ENCODE measurements at regions of chr10 and their contacts with region 1.

Region 1: GRCh38 chr10:6580279-6581029 is 378 bp upstream of the PRKCQ start:
- DNase-seq: peak; percentile 80 to 89 (median 83)
- H3K4me3 ChIP-seq: peak overlapping the region; percentile 81
- H3K4me3 Mint-ChIP-seq: peak overlapping the region; percentile 88 to 98 (median 94)
- H3K27ac ChIP-seq: peak overlapping the region; percentile 83
- H3K27ac Mint-ChIP-seq: peak overlapping the region; percentile 91 to 99 (median 96)
- H3K4me1 ChIP-seq: peaks cover 54% of the 10 kb centered on the region
- H3K4me1 Mint-ChIP-seq: peaks cover 62 to 70% (median 70%) of the 10 kb centered on the region in 3 donors
- H3K27me3 ChIP-seq: no peaks in the 10 kb centered on the region
- H3K27me3 Mint-ChIP-seq: no peaks in the 10 kb centered on the region

Region 2: GRCh38 chr10:6445501-6446316 is 134.7 kb before region 1 on chr10:
- CTCF ChIA-PET with region 1: interaction called, 26 read pairs
- POLR2A ChIA-PET with region 1: no interaction called
- DNase-seq: peak; percentile 25 to 71 (median 45)
- H3K4me3 ChIP-seq: no peak overlapping the region
- H3K4me3 Mint-ChIP-seq: peak overlapping the region in 2 of 7 donors; percentile 13 to 82
- H3K27ac ChIP-seq: no peak overlapping the region
- H3K27ac Mint-ChIP-seq: peak overlapping the region; percentile 1 to 95 (median 48)
- H3K4me1 ChIP-seq: peaks cover 6% of the 10 kb centered on the region
- H3K4me1 Mint-ChIP-seq: peaks cover 16 to 43% (median 23%) of the 10 kb centered on the region in 3 donors
- H3K27me3 ChIP-seq: no peaks in the 10 kb centered on the region
- H3K27me3 Mint-ChIP-seq: no peaks in the 10 kb centered on the region

Region 3: GRCh38 chr10:6530211-6530840 is 50.1 kb before region 1 on chr10:
- CTCF ChIA-PET with region 1: interaction called, 15 read pairs
- POLR2A ChIA-PET with region 1: interaction called, 11 read pairs
- DNase-seq: peak; percentile 55 to 85 (median 78)
- H3K4me3 ChIP-seq: peak overlapping the region; percentile 32
- H3K4me3 Mint-ChIP-seq: peak overlapping the region; percentile 65 to 93 (median 89)
- H3K27ac ChIP-seq: peak overlapping the region; percentile 69
- H3K27ac Mint-ChIP-seq: peak overlapping the region; percentile 93 to 100 (median 98)
- H3K4me1 ChIP-seq: peaks cover 72% of the 10 kb centered on the region
- H3K4me1 Mint-ChIP-seq: peaks cover 86 to 96% (median 96%) of the 10 kb centered on the region in 3 donors
- H3K27me3 ChIP-seq: no peaks in the 10 kb centered on the region
- H3K27me3 Mint-ChIP-seq: peaks cover 0 to 2% of the 10 kb centered on the region in 2 donors

Region 4: GRCh38 chr10:6558759-6559461 is 21.5 kb before region 1 on chr10:
- CTCF ChIA-PET with region 1: interaction called, 9 read pairs
- POLR2A ChIA-PET with region 1: interaction called, 10 read pairs
- DNase-seq: peak in 1 of 5 donors; percentile 58
- H3K4me3 ChIP-seq: no peak overlapping the region
- H3K4me3 Mint-ChIP-seq: peak overlapping the region; percentile 53 to 90 (median 84)
- H3K27ac ChIP-seq: peak overlapping the region; percentile 20
- H3K27ac Mint-ChIP-seq: peak overlapping the region; percentile 81 to 99 (median 94)
- H3K4me1 ChIP-seq: peaks cover 91% of the 10 kb centered on the region
- H3K4me1 Mint-ChIP-seq: peaks cover 87 to 96% (median 94%) of the 10 kb centered on the region in 3 donors
- H3K27me3 ChIP-seq: no peaks in the 10 kb centered on the region
- H3K27me3 Mint-ChIP-seq: no peaks in the 10 kb centered on the region

Region 5: DNA sequence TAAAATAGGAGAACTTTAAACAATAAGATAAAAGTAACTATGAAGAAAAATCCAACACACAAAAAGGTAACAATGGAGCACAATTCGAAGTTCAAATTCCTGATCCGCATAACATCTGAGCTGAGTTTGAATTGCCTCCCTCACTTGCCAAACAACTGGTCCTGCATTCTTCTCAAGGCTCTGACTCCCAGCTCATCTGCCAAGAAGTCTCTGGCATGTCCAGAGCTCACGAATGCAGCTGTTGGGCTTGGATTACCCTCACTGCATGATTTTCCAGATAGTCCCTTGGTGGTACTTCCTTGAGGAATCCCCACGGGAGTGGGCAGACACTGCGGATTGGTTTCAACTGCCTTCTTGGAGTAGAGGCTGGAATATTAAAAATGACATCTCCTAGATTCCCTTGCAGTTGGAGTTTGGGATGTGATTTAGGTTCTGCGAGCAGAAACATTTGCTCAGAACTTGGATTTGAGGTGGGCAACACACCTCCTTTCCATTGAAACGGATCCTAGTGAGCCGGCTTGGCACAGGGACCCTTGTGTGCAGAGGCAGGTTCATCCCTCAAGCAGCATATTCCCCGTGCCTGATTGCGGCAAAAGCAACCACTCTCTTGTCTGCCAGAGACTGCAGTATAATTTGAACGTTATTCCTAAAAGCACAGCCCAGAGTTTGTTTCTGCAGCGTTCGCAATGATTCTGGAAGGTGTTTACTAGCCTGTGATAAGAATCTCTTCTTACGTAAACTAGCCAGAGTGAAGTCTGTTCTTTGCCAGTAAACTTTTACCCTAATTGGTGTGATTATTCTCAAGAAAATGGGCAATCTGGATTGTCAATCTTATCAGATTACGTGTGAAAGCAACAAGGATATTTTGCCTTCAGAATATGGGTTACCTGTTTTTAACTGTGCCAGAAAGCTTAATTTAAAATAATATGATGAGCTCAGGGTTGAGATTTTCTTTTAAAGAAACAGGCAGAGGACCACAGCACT is 23.0 kb after region 1 on chr10:
- CTCF ChIA-PET with region 1: interaction called, 39 read pairs
- POLR2A ChIA-PET with region 1: interaction called, 3 read pairs
- DNase-seq: no peak
- H3K4me3 ChIP-seq: no peak overlapping the region
- H3K4me3 Mint-ChIP-seq: no peak overlapping the region
- H3K27ac ChIP-seq: no peak overlapping the region
- H3K27ac Mint-ChIP-seq: peak overlapping the region in 1 of 8 donors; percentile 15
- H3K4me1 ChIP-seq: peaks cover 43% of the 10 kb centered on the region
- H3K4me1 Mint-ChIP-seq: peaks cover 61 to 67% (median 67%) of the 10 kb centered on the region in 3 donors
- H3K27me3 ChIP-seq: no peaks in the 10 kb centered on the region
- H3K27me3 Mint-ChIP-seq: peaks cover 0 to 1% of the 10 kb centered on the region in 2 donors